Breast epithelium (tissue), 4 donors: ENCODE measurements at regions of chr3 and their contacts with region 1.

Region 1: DNA sequence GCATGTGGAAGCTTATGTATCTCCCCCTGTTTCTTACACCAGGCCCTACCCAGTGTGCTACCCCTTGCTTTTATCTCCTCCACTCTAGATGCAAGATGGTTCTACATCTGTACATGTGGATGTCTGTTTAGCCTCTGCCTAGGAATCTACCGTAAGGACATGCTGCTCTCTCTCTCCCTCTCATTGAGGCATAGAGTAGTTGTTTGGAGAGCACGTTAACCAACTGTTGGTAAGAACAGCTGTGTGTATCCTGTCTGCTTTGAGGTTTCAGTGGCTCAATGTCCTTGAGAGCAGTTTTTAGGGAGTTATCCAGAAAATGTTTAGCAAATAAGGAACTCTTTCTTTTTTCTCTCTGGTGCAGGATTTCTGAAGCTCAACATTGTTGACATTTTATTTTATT is 152.8 kb downstream of the DNAJB8 start:
- DNase-seq: no peak
- H3K4me3 ChIP-seq: no peak overlapping the region
- H3K27ac ChIP-seq: no peak overlapping the region
- H3K4me1 ChIP-seq: no peaks in the 10 kb centered on the region
- H3K27me3 ChIP-seq: no peaks in the 10 kb centered on the region
- CTCF ChIP-seq: no peak
- POLR2A ChIP-seq: no peak

Region 2: DNA sequence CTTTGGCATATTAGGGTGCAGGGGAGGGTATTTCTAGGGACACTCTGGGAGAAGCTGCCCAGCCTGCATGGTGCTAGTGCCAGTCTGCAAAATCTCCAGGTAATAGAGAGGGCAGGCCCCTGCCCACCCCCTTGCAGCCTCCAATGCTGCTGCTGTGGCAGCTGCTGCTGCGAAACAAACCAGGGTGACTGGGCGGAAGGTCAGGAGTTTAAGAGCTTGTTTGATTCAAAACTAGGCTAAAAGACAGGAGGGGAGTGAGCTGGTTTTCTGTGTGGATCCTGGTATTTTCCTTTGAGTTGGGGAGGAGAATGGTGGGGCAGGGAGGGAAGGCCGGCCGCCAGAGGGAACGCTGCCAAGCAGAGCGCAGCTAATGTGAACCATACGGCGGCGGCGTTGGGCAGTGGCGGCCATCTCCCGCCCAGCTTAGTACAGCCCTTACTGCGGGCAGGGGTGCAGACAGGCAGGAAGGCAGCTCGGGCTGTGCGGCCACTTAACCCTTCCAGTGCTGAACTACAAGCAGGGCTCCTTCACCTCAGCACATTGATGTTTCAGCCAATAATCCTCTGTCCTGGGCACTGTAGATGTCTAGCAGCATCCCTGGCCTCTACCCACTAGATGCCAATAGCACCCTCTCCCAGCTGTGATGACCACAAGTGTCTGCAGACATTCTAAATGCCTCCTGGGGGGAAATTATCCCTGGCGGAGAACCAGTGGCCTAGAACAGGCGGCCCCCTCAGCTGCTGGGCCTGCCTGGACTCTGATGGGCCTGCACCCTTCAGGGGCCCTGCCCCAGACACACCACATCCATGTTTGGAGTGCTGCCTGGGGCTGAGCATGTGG is 35.0 kb before region 1 on chr3:
- intact Hi-C with region 1: no loop called
- DNase-seq: no peak
- H3K4me3 ChIP-seq: no peak overlapping the region
- H3K27ac ChIP-seq: peak overlapping the region in 1 of 2 donors; percentile 16
- H3K4me1 ChIP-seq: peaks cover 0 to 3% of the 10 kb centered on the region in 2 donors
- H3K27me3 ChIP-seq: no peaks in the 10 kb centered on the region
- CTCF ChIP-seq: no peak
- POLR2A ChIP-seq: no peak

Region 3: GRCh38 chr3:128335324-128336201 is 21.6 kb after region 1 on chr3:
- intact Hi-C with region 1: loop called (anchors 1 kb)
- DNase-seq: peak; percentile 60 to 85
- H3K4me3 ChIP-seq: no peak overlapping the region
- H3K27ac ChIP-seq: peak overlapping the region; percentile 71 to 72
- H3K4me1 ChIP-seq: peaks cover 0 to 11% of the 10 kb centered on the region in 2 donors
- H3K27me3 ChIP-seq: no peaks in the 10 kb centered on the region
- CTCF ChIP-seq: no peak
- POLR2A ChIP-seq: no peak